Gastrocnemius medialis (tissue), 4 donors: ENCODE measurements at regions of chr1 and their contacts with region 1.

Region 1: GRCh38 chr1:9069326-9070100 is at the start of gene SLC2A5:
- DNase-seq: peak; percentile 89 to 92
- ATAC-seq: peak; percentile 91 to 93
- H3K4me3 ChIP-seq: peak within 1 kb of the TSS; percentile 26 to 56 (median 32)
- H3K27ac ChIP-seq: peak within 1 kb of the TSS; percentile 86 to 98 (median 92)
- H3K4me1 ChIP-seq: peaks cover 54 to 55% of the 10 kb centered on the region in 2 donors
- H3K27me3 ChIP-seq: no peaks in the 10 kb centered on the region
- CTCF ChIP-seq: no peak
- POLR2A ChIP-seq: peak; percentile 41 to 63
- total RNA-seq, gene SLC2A5: 11.2 to 34.5 (median 22.8) TPM

Region 2: DNA sequence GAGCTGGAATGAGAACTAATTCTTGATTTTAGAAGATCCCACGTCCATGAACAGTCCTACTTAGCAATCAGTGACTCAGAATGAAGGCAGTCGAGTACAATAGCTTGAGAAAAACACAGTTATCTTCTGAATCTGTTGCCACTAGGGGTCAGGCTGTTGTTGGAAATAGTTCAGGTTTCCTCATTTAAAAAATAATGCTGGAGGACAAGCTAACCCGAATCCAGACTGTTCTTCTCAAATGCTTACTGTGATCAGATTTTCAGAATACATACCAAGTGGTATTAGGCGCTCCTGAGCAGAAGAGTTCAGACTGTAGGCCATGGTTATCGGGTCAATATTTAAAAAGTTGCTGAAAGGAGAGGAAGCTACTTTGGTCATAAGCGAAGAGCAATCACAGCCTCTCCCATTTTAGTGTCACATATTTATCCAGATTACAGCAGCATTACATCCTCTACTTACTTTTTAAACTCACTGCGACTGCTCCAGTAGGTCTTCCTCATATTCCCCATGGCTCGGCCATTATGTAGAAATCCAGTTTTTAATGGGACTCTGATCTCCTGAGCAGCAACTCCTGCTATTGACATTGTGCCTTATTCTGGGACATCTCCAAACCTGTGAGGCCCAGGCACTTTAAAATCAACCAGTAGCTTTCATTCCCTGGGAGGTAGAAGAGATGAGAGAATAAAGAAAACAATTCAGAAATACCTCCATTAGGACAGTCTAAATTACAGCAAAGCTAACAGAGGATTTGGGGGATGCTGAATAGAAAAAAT is 1054.3 kb before region 1 on chr1:
- in situ Hi-C with region 1: no loop called
- intact Hi-C with region 1: loop called (anchors 10 kb)
- DNase-seq: no peak
- ATAC-seq: peak; percentile 15 to 22
- H3K4me3 ChIP-seq: peak overlapping the region in 3 of 4 donors; percentile 5 to 23 (median 12)
- H3K27ac ChIP-seq: peak overlapping the region; percentile 64 to 94 (median 88)
- H3K4me1 ChIP-seq: peaks cover 88 to 96% of the 10 kb centered on the region in 2 donors
- H3K27me3 ChIP-seq: no peaks in the 10 kb centered on the region
- CTCF ChIP-seq: peak; percentile 55 to 64 (median 60)
- POLR2A ChIP-seq: no peak

Region 3: DNA sequence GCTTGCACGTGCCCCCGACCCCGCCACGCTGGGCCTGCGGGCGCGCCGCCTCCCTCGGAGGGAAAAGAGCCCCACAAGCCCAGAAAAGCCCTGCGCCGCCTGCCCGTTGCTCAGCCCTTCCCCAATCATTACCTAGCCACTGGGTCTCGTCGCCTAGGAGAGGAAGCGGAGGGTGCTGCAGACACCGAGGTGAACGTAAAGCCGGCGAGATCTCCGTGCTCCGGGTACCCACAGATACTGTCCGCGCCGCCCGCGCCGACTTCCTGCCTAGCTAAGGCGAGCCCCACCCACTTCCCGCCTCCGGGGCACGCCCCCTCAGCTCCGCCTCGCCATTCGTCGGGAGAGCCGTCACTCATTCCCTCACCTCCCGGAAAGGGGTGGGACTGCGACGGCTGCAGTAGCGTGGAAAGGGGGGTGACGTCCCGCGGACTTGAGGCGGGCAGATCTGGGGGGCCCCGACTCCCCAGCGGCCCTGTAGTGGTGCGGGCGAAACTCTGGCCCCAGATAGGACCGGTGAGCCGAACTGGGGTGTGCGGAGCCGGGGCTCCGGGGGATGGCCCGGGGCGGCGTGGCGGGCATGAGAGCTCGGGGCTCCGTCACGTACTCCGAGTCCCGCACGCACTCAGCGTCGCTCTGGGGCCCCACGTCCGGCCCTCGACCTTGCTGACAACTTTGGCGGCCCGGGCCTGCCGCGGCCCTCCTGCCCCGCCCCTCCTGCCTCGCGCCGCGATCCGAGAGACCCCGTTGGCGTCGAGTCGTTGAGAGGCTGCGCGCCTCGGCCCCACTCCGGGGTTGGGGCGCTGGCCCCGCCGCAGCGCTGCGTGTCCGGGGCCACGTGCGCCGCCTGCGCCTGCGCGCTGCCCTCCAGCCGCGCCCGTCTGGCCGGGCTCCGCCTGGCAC is 190.8 kb before region 1 on chr1 and contains the start of gene ENO1:
- in situ Hi-C with region 1: no loop called
- intact Hi-C with region 1: loop called (anchors 5 kb)
- DNase-seq: peak; percentile 97 to 98
- ATAC-seq: peak; percentile 83 to 87
- H3K4me3 ChIP-seq: peak within 1 kb of the TSS; percentile 63 to 92 (median 76)
- H3K27ac ChIP-seq: peak within 1 kb of the TSS; percentile 96 to 98 (median 97)
- H3K4me1 ChIP-seq: peaks cover 47 to 48% of the 10 kb centered on the region in 2 donors
- H3K27me3 ChIP-seq: no peaks in the 10 kb centered on the region
- CTCF ChIP-seq: peak in 2 of 5 experiments; percentile 21 to 33
- POLR2A ChIP-seq: peak; percentile 99
- total RNA-seq, gene ENO1: 112 to 354 (median 209) TPM

Region 4: GRCh38 chr1:9234223-9235095 is 164.9 kb after region 1 on chr1 and contains the start of gene H6PD:
- in situ Hi-C with region 1: no loop called
- intact Hi-C with region 1: loop called (anchors 5 kb)
- DNase-seq: peak; percentile 76 to 85
- ATAC-seq: peak; percentile 37 to 42
- H3K4me3 ChIP-seq: peak within 1 kb of the TSS; percentile 74 to 87 (median 79)
- H3K27ac ChIP-seq: peak within 1 kb of the TSS; percentile 86 to 99 (median 92)
- H3K4me1 ChIP-seq: peaks cover 65 to 69% of the 10 kb centered on the region in 2 donors
- H3K27me3 ChIP-seq: no peaks in the 10 kb centered on the region
- CTCF ChIP-seq: peak; percentile 71 to 97 (median 87)
- POLR2A ChIP-seq: peak; percentile 89 to 97
- total RNA-seq, gene H6PD: 37.3 to 65.1 (median 44.4) TPM

Region 5: DNA sequence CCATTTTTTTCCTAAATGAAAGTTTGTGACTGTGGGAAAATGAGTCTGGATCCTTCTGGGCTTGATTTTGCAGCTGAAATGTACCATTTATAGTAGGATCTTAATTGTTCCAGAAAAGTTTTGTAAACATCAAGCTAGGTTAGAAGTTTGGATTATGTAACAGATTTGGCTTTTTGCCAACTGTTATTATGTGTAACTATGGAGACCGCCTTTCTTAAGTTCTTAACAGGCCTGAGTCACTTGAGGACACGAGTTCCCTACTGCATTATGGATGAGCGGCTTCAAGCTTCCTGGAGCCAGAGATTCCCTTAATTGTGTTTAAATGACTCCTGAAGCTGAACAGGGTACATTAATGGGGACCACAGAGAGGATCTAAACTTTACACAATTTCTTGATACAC is 491.9 kb after region 1 on chr1:
- in situ Hi-C with region 1: no loop called
- intact Hi-C with region 1: loop called (anchors 10 kb)
- DNase-seq: peak; percentile 53 to 57
- ATAC-seq: peak; percentile 85 to 93
- H3K4me3 ChIP-seq: no peak overlapping the region
- H3K27ac ChIP-seq: peak overlapping the region; percentile 94 to 100 (median 96)
- H3K4me1 ChIP-seq: peaks cover 58 to 61% of the 10 kb centered on the region in 2 donors
- H3K27me3 ChIP-seq: no peaks in the 10 kb centered on the region
- CTCF ChIP-seq: no peak
- POLR2A ChIP-seq: no peak